Posterior cingulate gyrus (tissue), 11 donors: ENCODE measurements at regions of chr4 and their contacts with region 1.

Region 1: DNA sequence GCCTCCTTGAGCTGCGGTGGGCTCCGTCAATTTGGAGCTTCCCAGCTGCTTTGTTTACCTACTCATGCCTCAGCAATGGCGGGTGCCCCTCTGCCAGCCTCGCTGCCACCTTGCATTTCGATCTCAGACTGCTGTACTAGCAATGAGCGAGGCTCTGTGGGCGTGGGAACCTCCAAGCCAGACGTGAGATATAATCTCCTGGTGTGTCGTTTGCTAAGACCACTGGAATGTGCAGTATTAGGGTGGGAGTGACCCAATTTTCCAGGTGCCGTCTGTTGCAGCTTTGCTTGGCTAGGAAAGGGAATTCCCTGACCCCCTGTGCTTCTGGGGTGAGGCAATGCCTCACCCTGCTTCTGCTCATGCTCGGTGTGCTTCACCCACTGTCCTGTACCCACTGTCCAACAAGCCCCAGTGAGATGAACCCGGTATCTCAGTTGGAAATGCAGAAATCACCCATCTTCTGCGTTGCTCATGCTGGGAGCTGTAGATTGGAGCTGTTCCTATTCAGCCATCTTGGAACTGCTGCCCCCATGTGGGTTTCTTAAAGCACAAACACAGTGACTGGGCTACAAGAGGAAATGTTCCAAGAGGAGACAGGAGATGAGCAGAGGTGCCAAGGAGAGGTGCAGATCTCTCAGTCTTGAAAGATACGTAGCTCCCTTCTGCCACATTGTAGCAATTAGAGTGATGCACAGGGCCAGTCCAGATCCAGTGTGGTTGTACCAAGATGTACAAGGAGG is 193.0 kb upstream of the IGFBP7 start:
- DNase-seq: peak in 2 of 10 donors; percentile 25 to 38

Region 2: DNA sequence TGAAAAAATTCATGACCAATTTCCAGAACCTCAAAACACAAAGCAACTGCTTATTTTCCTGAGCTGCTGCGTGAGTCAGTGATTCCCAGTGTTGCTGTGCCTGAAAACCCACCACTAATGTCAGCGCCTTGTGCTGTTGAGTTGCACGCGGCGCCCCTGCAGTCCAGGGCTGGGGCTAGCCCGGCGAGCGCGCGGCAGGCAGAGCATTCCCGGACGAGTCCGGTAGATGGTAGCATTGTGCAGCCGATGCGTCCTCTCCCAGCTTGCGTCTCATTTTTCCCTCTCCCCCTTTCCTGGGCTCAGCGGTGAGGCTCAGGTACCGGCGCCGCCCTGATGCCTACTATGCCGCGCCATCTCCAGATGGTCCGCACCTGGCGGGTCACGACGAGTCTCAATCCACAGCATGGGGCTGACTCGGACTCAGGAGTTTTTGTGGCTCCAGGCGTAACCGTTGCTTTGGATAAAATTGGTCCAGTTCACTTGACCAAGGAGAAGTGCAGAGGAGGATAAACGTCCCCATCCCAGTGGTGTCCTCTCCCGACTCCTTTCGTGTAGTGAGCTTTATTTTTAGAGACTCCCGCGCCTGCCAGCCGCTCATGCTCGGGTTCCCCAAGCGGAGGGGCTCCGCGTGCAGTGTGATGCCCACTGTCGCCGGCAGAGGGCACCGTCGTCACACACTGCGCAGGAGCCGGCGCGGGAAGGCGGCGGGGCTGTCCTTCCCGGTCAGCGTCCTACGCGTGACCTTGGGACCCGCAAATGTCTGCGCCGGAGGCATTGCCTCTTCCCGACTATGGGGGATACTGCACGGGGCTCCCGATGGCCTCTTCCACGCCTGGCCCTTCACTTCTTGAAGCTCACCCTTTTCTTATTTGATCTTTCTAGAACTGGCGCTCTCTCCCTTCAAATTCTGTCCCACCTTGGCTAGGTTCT is 139.4 kb before region 1 on chr4:
- intact Hi-C with region 1: loop called (anchors 2 kb)
- DNase-seq: peak; percentile 71 to 97 (median 84)

Region 3: DNA sequence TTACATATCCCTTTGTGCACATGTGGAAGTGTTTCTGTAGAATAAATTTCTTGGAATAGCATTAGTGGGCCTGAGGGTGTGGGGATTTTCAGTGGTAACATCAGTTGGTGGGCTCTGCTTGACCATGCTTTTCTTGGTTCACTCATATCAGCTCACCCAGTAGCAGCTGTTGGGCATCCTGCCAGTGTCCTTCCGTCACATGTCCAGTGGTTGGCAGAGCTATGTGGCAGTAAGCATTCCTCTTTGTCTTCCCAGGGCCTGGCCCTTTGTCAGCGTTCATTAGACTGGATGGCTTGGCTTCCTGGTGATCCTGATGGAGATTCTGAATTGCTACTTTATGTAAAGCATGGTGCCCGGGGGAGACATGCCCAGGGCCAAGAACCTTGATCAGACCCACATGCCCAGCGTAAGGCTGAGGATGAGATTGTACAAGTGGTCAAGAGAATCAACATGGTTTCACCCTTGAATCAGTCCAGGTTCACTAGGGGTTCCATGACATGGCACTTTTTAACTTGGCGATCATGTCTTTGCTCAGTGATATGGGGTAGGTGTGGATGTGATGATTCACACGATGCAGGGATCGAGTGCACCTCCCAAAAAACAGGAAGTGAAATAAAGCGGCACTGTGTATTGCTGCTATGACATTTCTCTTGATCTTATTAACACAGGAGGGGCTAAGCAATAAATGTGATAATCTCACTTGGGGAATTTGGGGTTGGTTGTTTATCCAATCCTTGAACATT is 120.9 kb before region 1 on chr4:
- intact Hi-C with region 1: no loop called
- DNase-seq: peak; percentile 72 to 98 (median 90)

Region 4: GRCh38 chr4:57475424-57475823 is 172.2 kb after region 1 on chr4:
- intact Hi-C with region 1: no loop called
- DNase-seq: no peak

Region 5: GRCh38 chr4:58138786-58139668 is 835.8 kb after region 1 on chr4:
- intact Hi-C with region 1: no loop called
- DNase-seq: no peak